ENCODE measurements at regions of chr10 and their contacts with region 1.

Region 1: GRCh38 chr10:51487576-51487975 is 211.8 kb downstream of the CSTF2T start:
- H3K4me3 ChIP-seq: no peak overlapping the region
- H3K27ac ChIP-seq: no peak overlapping the region
- H3K4me1 ChIP-seq: no peaks in the 10 kb centered on the region
- CTCF ChIP-seq: no peak

Region 2: GRCh38 chr10:51468424-51468823 is 19.2 kb before region 1 on chr10:
- CTCF ChIA-PET with region 1: no interaction called
- POLR2A ChIA-PET with region 1: no interaction called
- H3K4me3 ChIP-seq: no peak overlapping the region
- H3K27ac ChIP-seq: no peak overlapping the region
- H3K4me1 ChIP-seq: no peaks in the 10 kb centered on the region
- CTCF ChIP-seq: no peak

Region 3: GRCh38 chr10:51542863-51543262 is 55.3 kb after region 1 on chr10:
- CTCF ChIA-PET with region 1: no interaction called
- POLR2A ChIA-PET with region 1: no interaction called
- H3K4me3 ChIP-seq: no peak overlapping the region
- H3K27ac ChIP-seq: no peak overlapping the region
- H3K4me1 ChIP-seq: no peaks in the 10 kb centered on the region
- CTCF ChIP-seq: no peak

Region 4: DNA sequence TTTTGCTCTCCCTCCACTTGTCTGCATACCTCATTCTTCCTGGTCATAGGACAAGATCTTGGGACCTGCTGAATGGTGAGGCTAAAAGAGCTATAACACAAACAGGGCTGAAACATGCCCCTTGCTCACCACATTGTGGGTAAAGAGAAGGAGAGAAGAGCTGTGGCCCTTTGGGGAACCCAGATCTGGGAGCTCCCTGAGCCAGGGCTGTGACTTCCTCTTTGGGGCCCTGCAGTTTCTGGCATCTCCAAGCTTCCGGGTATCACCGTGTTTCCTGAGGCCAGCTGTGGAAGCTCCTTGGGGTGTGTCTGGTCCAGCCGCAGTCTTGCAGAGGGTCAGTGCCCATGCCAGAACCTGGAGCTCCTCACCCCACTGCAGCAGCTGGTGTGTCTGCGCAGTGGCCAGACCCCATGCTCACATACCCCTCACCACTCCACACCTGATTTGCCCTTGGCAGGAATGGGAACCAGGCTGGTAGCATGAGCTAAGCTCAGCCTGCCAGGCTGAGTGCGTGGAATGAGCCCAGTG is 860.5 kb after region 1 on chr10:
- CTCF ChIA-PET with region 1: no interaction called
- POLR2A ChIA-PET with region 1: interaction called, 10 read pairs
- H3K4me3 ChIP-seq: no peak overlapping the region
- H3K27ac ChIP-seq: no peak overlapping the region
- H3K4me1 ChIP-seq: no peaks in the 10 kb centered on the region
- CTCF ChIP-seq: no peak

Measured in HEK293 (cell line).